Left ventricle myocardium inferior (tissue), 1 donor: ENCODE measurements at regions of chr9 and their contacts with region 1.

Region 1: GRCh38 chr9:116737152-116737546 is 50.0 kb downstream of the TRIM32 start:
- DNase-seq: peak; percentile 73
- H3K4me3 ChIP-seq: no peak overlapping the region
- H3K27ac ChIP-seq: no peak overlapping the region
- H3K4me1 ChIP-seq: peaks cover 10% of the 10 kb centered on the region
- H3K27me3 ChIP-seq: peaks cover 8% of the 10 kb centered on the region
- CTCF ChIP-seq: peak; percentile 87

Region 2: DNA sequence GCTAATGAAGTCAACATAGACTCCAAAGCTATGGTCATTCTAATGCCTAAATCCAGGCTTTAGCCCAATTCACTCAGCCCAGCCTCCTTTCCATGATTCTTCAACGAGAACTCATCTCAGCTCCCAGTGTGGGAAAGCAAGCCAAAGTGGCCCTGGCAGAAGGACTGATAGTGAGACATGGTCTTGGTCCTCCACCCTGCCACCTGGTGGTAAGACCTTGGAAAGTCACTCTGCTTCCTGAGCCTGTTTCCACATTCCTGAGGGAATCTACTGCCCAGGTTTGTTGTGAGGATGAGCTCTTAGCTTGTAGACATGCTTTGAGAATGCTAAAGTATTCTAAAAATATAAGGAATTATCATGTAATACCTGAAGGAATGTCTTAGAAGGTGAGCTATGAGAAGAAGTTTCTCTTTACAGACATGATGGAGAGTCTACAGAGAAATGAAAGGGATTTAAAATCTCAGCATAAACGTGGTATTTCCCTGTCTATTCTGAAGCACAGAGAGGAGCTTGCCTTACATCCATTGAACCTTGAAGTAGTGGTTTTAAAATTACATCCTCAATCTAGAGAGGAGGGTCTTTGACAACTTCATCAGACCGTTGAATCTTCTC is 123.5 kb after region 1 on chr9:
- intact Hi-C with region 1: loop called (anchors 5 kb)
- DNase-seq: peak; percentile 47
- H3K4me3 ChIP-seq: no peak overlapping the region
- H3K27ac ChIP-seq: no peak overlapping the region
- H3K4me1 ChIP-seq: no peaks in the 10 kb centered on the region
- H3K27me3 ChIP-seq: peaks cover 38% of the 10 kb centered on the region
- CTCF ChIP-seq: peak; percentile 82